ENCODE measurements at regions of chr11 and their contacts with region 1.

Region 1: GRCh38 chr11:113289431-113290187 is 24.8 kb upstream of the TTC12 start:
- DNase-seq: peak; percentile 81
- ATAC-seq: peak; percentile 98
- H3K4me3 Mint-ChIP-seq: no peak overlapping the region
- H3K27ac Mint-ChIP-seq: no peak overlapping the region
- H3K4me1 Mint-ChIP-seq: peaks cover 5% of the 10 kb centered on the region
- H3K27me3 Mint-ChIP-seq: no peaks in the 10 kb centered on the region; the same call in 1 of the 2 replicates
- CTCF ChIP-seq: peak; percentile 86

Region 2: GRCh38 chr11:112345708-112346107 is 943.9 kb before region 1 on chr11:
- CTCF ChIA-PET with region 1: interaction called, 10 read pairs
- POLR2A ChIA-PET with region 1: no interaction called
- DNase-seq: peak; percentile 42
- ATAC-seq: peak; percentile 91
- H3K4me3 Mint-ChIP-seq: no peak overlapping the region
- H3K27ac Mint-ChIP-seq: no peak overlapping the region
- H3K4me1 Mint-ChIP-seq: peaks cover 6% of the 10 kb centered on the region
- H3K27me3 Mint-ChIP-seq: no peaks in the 10 kb centered on the region; the same call in 1 of the 2 replicates
- CTCF ChIP-seq: 0 out of 2 replicates have a peak, but pooled peaks have one; percentile 16

Region 3: GRCh38 chr11:112564228-112564955 is 725.2 kb before region 1 on chr11:
- CTCF ChIA-PET with region 1: interaction called, 12 read pairs
- POLR2A ChIA-PET with region 1: no interaction called
- DNase-seq: no peak
- ATAC-seq: no peak
- H3K4me3 Mint-ChIP-seq: no peak overlapping the region
- H3K27ac Mint-ChIP-seq: no peak overlapping the region
- H3K4me1 Mint-ChIP-seq: peaks cover 5% of the 10 kb centered on the region
- H3K27me3 Mint-ChIP-seq: no peaks in the 10 kb centered on the region
- CTCF ChIP-seq: no peak

Region 4: GRCh38 chr11:113113801-113114706 is 175.6 kb before region 1 on chr11:
- CTCF ChIA-PET with region 1: interaction called, 17 read pairs
- POLR2A ChIA-PET with region 1: no interaction called
- DNase-seq: peak; percentile 62
- ATAC-seq: peak; percentile 99
- H3K4me3 Mint-ChIP-seq: no peak overlapping the region
- H3K27ac Mint-ChIP-seq: no peak overlapping the region
- H3K4me1 Mint-ChIP-seq: peaks cover 5% of the 10 kb centered on the region
- H3K27me3 Mint-ChIP-seq: no peaks in the 10 kb centered on the region
- CTCF ChIP-seq: peak; percentile 33; the same call in 1 of the 2 replicates

Region 5: GRCh38 chr11:113314389-113315301 is 25.0 kb after region 1 on chr11 and contains the start of gene TTC12:
- CTCF ChIA-PET with region 1: interaction called, 11 read pairs
- POLR2A ChIA-PET with region 1: no interaction called
- DNase-seq: peak; percentile 97
- ATAC-seq: peak; percentile 97
- H3K4me3 Mint-ChIP-seq: peak within 1 kb of the TSS; percentile 77
- H3K27ac Mint-ChIP-seq: peak within 1 kb of the TSS; percentile 67; the same call in 1 of the 2 replicates
- H3K4me1 Mint-ChIP-seq: peaks cover 24% of the 10 kb centered on the region
- H3K27me3 Mint-ChIP-seq: peaks cover 11% of the 10 kb centered on the region
- CTCF ChIP-seq: no peak
- total RNA-seq, gene TTC12: 7.6 to 11.5 TPM (median 10.9 TPM) in 3 replicates

Region 6: GRCh38 chr11:113417428-113417827 is 127.8 kb after region 1 on chr11:
- CTCF ChIA-PET with region 1: no interaction called
- POLR2A ChIA-PET with region 1: no interaction called
- DNase-seq: no peak
- ATAC-seq: no peak
- H3K4me3 Mint-ChIP-seq: no peak overlapping the region
- H3K27ac Mint-ChIP-seq: no peak overlapping the region
- H3K4me1 Mint-ChIP-seq: no peaks in the 10 kb centered on the region
- H3K27me3 Mint-ChIP-seq: no peaks in the 10 kb centered on the region
- CTCF ChIP-seq: no peak

Measured in WTC11 (cell line).